HCT116 (cell line): ENCODE measurements at regions of chr7 and their contacts with region 1.

Region 1: GRCh38 chr7:2460188-2460587 is 16.0 kb downstream of the GRIFIN start:
- DNase-seq: no peak
- ATAC-seq: no peak
- H3K4me3 ChIP-seq: no peak overlapping the region
- H3K27ac ChIP-seq: no peak overlapping the region
- H3K4me1 ChIP-seq: no peaks in the 10 kb centered on the region; a peak in 1 of 4 replicates
- H3K27me3 ChIP-seq: no peaks in the 10 kb centered on the region
- CTCF ChIP-seq: no peak
- POLR2A ChIP-seq: no peak
- RAD21 ChIP-seq: no peak

Region 2: DNA sequence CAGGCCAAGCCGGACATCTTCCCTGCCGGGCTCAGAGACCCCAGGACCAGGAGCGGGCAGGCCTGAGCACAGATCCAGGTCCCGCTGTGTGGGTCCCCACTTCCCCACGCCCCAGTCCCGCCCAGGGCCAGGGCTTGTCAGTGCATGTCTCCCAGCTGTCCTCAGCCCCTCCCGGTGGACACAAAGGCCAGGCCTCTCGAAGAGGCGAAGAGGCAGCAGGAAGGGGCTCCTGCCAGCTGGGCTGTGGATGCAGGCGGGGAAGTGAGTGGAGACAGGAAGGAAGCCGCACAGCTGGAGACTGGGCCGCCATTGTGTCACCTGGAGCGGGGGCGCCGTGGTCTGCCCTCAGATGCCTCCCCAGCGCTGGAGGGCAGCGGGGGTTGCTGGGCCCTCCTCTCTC is 11.2 kb after region 1 on chr7:
- CTCF ChIA-PET with region 1: interaction called, 13 read pairs
- POLR2A ChIA-PET with region 1: no interaction called
- RAD21 ChIA-PET with region 1: no interaction called
- intact Hi-C with region 1: no loop called
- DNase-seq: no peak
- ATAC-seq: no peak
- H3K4me3 ChIP-seq: no peak overlapping the region
- H3K27ac ChIP-seq: no peak overlapping the region
- H3K4me1 ChIP-seq: peaks cover 4 to 15% of the 10 kb centered on the region in 2 experiments; a peak in 2 of 4 replicates
- H3K27me3 ChIP-seq: no peaks in the 10 kb centered on the region
- CTCF ChIP-seq: no peak
- POLR2A ChIP-seq: no peak
- RAD21 ChIP-seq: no peak

Region 3: GRCh38 chr7:2508327-2509215 is 48.4 kb after region 1 on chr7:
- CTCF ChIA-PET with region 1: no interaction called
- POLR2A ChIA-PET with region 1: no interaction called
- RAD21 ChIA-PET with region 1: no interaction called
- intact Hi-C with region 1: no loop called
- DNase-seq: no peak
- ATAC-seq: no peak
- H3K4me3 ChIP-seq: no peak overlapping the region
- H3K27ac ChIP-seq: no peak overlapping the region; the same call in 1 of the 2 replicates
- H3K4me1 ChIP-seq: no peaks in the 10 kb centered on the region
- H3K27me3 ChIP-seq: no peaks in the 10 kb centered on the region
- CTCF ChIP-seq: no peak
- POLR2A ChIP-seq: no peak
- RAD21 ChIP-seq: no peak